Caco-2 (cell line): ENCODE measurements at regions of chr1 and their contacts with region 1.

Region 1: GRCh38 chr1:38608202-38608864 is 251.2 kb downstream of the RRAGC start:
- DNase-seq: no peak
- H3K4me3 ChIP-seq: no peak overlapping the region
- H3K4me3 Mint-ChIP-seq: no peak overlapping the region
- H3K27ac Mint-ChIP-seq: no peak overlapping the region
- H3K4me1 ChIP-seq: no peaks in the 10 kb centered on the region
- H3K4me1 Mint-ChIP-seq: no peaks in the 10 kb centered on the region
- H3K27me3 ChIP-seq: no peaks in the 10 kb centered on the region; the same call in 1 of the 2 replicates
- H3K27me3 Mint-ChIP-seq: peaks cover 10% of the 10 kb centered on the region
- CTCF ChIP-seq: peak; percentile 21 to 34

Region 2: DNA sequence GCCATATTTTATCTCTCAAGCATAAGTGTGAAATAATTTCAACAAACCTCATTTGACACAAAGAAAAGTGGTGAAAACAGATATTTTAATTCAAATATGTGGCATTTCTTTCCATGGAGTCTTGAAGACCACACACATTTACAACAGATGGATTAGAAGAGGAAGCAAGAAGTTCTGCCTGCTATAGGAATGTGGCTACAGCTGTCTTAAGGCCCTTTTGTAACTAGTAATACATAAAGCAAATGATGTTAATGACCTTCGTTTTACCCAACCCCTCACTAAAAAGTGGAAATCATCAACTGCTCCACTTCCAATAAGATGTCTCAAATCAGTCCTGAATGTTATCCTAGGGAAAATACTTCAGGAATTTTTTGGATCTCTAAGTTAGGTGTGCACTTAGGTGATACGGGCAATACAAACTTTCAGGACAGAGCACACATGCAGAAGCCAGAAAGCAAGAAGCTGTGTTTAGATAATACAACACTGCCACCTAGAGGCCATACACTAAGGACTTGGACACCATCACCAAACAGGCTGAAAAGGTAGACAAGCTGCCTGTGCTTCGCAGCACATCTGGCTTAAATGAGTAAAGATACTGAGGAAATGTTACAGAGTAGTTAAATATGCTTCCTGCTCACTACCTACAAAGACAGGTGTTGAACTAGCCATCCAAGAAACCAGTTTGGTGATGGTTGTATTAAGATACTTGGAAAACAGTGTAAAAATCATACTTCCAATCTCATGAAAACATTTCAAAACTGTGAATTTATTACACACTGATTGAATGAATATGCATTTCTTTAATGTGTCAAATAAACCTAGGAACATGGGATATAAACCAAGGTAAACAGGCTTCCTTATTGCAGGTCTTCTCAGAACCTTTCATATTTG is 226.8 kb after region 1 on chr1:
- CTCF ChIA-PET with region 1: no interaction called
- POLR2A ChIA-PET with region 1: no interaction called
- intact Hi-C with region 1: loop called (anchors 10 kb)
- DNase-seq: peak; percentile 42 to 67
- H3K4me3 ChIP-seq: no peak overlapping the region
- H3K4me3 Mint-ChIP-seq: no peak overlapping the region
- H3K27ac Mint-ChIP-seq: no peak overlapping the region
- H3K4me1 ChIP-seq: no peaks in the 10 kb centered on the region
- H3K4me1 Mint-ChIP-seq: no peaks in the 10 kb centered on the region
- H3K27me3 ChIP-seq: no peaks in the 10 kb centered on the region
- H3K27me3 Mint-ChIP-seq: peaks cover 5% of the 10 kb centered on the region
- CTCF ChIP-seq: peak; percentile 46 to 56